Psoas muscle (tissue), 8 donors: ENCODE measurements at regions of chr18 and their contacts with region 1.

Region 1: DNA sequence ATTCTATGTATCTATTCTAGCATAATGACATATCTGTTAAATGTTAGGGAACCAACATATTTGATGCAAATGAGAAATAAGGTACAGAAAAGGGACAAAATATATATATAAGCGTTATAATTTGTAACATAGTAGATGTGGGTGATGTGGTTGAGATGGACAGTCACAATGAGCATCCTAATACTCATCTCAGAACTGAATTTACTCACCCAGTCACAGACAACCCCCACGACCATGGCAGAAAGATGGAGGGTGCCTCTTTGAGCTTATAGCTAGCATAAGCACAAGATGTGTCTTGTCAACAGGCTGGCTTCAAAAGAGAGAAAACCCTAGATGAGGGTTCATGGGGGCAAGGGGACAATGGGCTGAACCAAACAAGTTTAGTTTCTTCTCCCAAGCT is 9.1 kb upstream of the DSG3 start:
- DNase-seq: no peak
- ATAC-seq: no peak
- H3K4me3 ChIP-seq: no peak overlapping the region
- H3K27ac ChIP-seq: no peak overlapping the region
- H3K4me1 ChIP-seq: no peaks in the 10 kb centered on the region
- H3K27me3 ChIP-seq: peaks cover 0 to 4% (median 0%) of the 10 kb centered on the region in 3 donors
- CTCF ChIP-seq: no peak

Region 2: GRCh38 chr18:31454066-31454708 is 15.8 kb after region 1 on chr18:
- intact Hi-C with region 1: loop called in 1 of 2 experiments (anchors 1 kb)
- DNase-seq: no peak
- ATAC-seq: no peak
- H3K4me3 ChIP-seq: no peak overlapping the region
- H3K27ac ChIP-seq: no peak overlapping the region
- H3K4me1 ChIP-seq: no peaks in the 10 kb centered on the region
- H3K27me3 ChIP-seq: no peaks in the 10 kb centered on the region
- CTCF ChIP-seq: no peak